ENCODE measurements at regions of chr10 and their contacts with region 1.

Region 1: GRCh38 chr10:28381903-28382347 is 79.1 kb upstream of the MPP7 start:
- DNase-seq: peak; percentile 66 to 77 (median 74)
- ATAC-seq: peak; percentile 94 to 96 (median 96)
- H3K4me3 ChIP-seq: no peak overlapping the region
- H3K27ac ChIP-seq: no peak overlapping the region
- H3K4me1 ChIP-seq: peaks cover 0 to 5% (median 0%) of the 10 kb centered on the region in 4 donors
- H3K27me3 ChIP-seq: no peaks in the 10 kb centered on the region
- CTCF ChIP-seq: peak; percentile 92 to 98 (median 93)
- POLR2A ChIP-seq: no peak

Region 2: GRCh38 chr10:27745732-27746396 is 636.1 kb before region 1 on chr10 and contains the start of gene MKX:
- intact Hi-C with region 1: no loop called
- DNase-seq: peak in 2 of 3 donors; percentile 39 to 60
- ATAC-seq: no peak
- H3K4me3 ChIP-seq: peak within 1 kb of the TSS; percentile 7 to 42 (median 34)
- H3K27ac ChIP-seq: no peak within 1 kb of the TSS
- H3K4me1 ChIP-seq: peaks cover 0 to 32% (median 6%) of the 10 kb centered on the region in 4 donors
- H3K27me3 ChIP-seq: peaks cover 13 to 20% of the 10 kb centered on the region in 2 donors
- CTCF ChIP-seq: no peak
- POLR2A ChIP-seq: no peak
- total RNA-seq, gene MKX: 0.29 to 2.1 (median 0.66) TPM

Region 3: DNA sequence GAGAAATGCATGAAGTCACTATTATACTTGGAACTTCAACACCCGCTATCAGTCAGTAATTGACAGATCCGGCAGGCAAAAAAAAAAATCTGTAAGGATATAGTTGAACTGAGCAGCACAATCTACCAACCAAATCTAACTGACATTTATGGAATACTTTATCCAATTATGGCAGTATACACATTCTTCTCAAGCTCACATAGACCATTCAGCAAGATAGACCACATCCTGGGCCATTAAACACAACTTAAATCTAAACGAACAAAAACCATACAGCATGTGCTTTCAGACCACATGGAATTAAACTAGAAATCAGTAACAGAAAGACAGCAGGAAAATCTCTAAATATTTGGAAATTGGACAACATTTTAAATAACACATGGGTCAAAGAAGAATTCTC is 191.7 kb before region 1 on chr10:
- intact Hi-C with region 1: no loop called
- DNase-seq: no peak
- ATAC-seq: no peak
- H3K4me3 ChIP-seq: no peak overlapping the region
- H3K27ac ChIP-seq: no peak overlapping the region
- H3K4me1 ChIP-seq: no peaks in the 10 kb centered on the region
- H3K27me3 ChIP-seq: no peaks in the 10 kb centered on the region
- CTCF ChIP-seq: no peak
- POLR2A ChIP-seq: no peak

Region 4: GRCh38 chr10:28250782-28251181 is 131.1 kb before region 1 on chr10:
- intact Hi-C with region 1: loop called (anchors 5 kb)
- DNase-seq: no peak
- ATAC-seq: peak; percentile 44 to 75 (median 60)
- H3K4me3 ChIP-seq: no peak overlapping the region
- H3K27ac ChIP-seq: no peak overlapping the region
- H3K4me1 ChIP-seq: no peaks in the 10 kb centered on the region
- H3K27me3 ChIP-seq: no peaks in the 10 kb centered on the region
- CTCF ChIP-seq: peak; percentile 52 to 61 (median 60)
- POLR2A ChIP-seq: no peak